CD14-positive monocyte (primary cell): ENCODE measurements at regions of chr10 and their contacts with region 1.

Region 1: GRCh38 chr10:62545160-62546066 is 171.2 kb downstream of the ZNF365 start:
- DNase-seq: peak; percentile 78 to 93 (median 91)
- H3K4me3 ChIP-seq: peak overlapping the region in 1 of 3 experiments; percentile 32
- H3K4me3 Mint-ChIP-seq: peak overlapping the region in 1 of 2 donors; percentile 76
- H3K27ac ChIP-seq: peak overlapping the region; percentile 69 to 87
- H3K27ac Mint-ChIP-seq: peak overlapping the region; percentile 95 to 99 (median 98)
- H3K4me1 ChIP-seq: peaks cover 56 to 66% of the 10 kb centered on the region in 2 donors
- H3K4me1 Mint-ChIP-seq: peaks cover 59% of the 10 kb centered on the region
- H3K27me3 ChIP-seq: no peaks in the 10 kb centered on the region
- H3K27me3 Mint-ChIP-seq: peaks cover 0 to 4% (median 2%) of the 10 kb centered on the region in 3 donors
- CTCF ChIP-seq: no peak

Region 2: DNA sequence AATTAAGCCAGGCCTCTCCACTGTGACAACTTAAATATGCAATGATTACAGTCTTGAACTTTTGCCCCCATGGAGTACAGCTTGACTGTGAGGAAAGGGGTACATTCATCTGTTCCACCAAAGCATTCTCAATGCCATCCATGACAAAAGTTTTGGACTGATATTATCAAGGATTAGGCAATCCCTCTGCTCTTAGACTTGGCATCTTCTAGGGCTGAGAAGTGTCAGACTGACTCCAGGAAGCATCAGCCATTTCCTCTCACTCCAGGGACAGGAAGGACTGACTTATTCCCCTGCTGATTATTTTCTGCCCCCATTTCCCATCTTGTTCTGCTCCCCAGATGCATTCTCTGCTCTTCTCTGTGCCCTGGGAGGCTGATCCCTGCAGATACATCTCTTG is 101.5 kb before region 1 on chr10:
- intact Hi-C with region 1: loop called (anchors 5 to 10 kb)
- DNase-seq: no peak
- H3K4me3 ChIP-seq: no peak overlapping the region
- H3K4me3 Mint-ChIP-seq: no peak overlapping the region
- H3K27ac ChIP-seq: no peak overlapping the region
- H3K27ac Mint-ChIP-seq: peak overlapping the region in 1 of 7 donors; percentile 27
- H3K4me1 ChIP-seq: no peaks in the 10 kb centered on the region
- H3K4me1 Mint-ChIP-seq: peaks cover 4% of the 10 kb centered on the region
- H3K27me3 ChIP-seq: no peaks in the 10 kb centered on the region
- H3K27me3 Mint-ChIP-seq: peaks cover 1 to 10% (median 2%) of the 10 kb centered on the region in 3 donors
- CTCF ChIP-seq: no peak

Region 3: DNA sequence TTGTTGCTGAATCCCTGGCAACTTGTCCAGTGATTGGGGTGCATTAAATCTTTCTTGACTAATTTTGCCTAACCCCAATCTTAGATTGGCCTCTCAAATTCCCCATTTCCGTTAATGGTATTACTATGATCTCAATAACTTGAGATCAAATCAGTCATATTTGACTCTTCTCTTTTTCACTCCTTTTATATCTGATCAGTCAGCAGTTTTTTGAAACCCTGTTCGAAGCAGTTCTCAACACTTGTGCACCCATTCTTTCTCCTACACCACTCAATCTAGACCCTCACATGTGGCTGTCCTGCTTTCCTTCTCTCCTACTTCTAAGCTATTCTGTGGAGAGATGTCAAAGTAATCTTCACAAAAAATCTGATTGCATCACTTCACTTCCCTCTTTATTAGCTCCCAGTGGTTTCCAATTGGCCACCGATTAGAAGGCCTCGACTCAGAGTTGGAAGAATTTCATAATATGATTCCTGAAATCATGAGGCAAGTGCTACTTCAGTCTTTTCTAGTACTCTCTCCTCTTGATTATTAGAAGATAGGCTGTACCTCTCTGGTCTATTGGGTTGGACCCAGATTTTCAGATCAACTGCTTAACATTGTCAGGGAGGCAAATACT is 42.3 kb before region 1 on chr10:
- intact Hi-C with region 1: loop called (anchors 5 kb)
- DNase-seq: peak; percentile 76 to 92 (median 89)
- H3K4me3 ChIP-seq: peak overlapping the region in 1 of 3 experiments; percentile 17
- H3K4me3 Mint-ChIP-seq: peak overlapping the region in 1 of 2 donors; percentile 49
- H3K27ac ChIP-seq: peak overlapping the region in 1 of 2 donors; percentile 81
- H3K27ac Mint-ChIP-seq: peak overlapping the region; percentile 85 to 99 (median 94)
- H3K4me1 ChIP-seq: peaks cover 63 to 77% of the 10 kb centered on the region in 2 donors
- H3K4me1 Mint-ChIP-seq: peaks cover 56% of the 10 kb centered on the region
- H3K27me3 ChIP-seq: no peaks in the 10 kb centered on the region
- H3K27me3 Mint-ChIP-seq: peaks cover 0 to 3% (median 0%) of the 10 kb centered on the region in 3 donors
- CTCF ChIP-seq: no peak

Region 4: GRCh38 chr10:62637249-62638061 is 92.0 kb after region 1 on chr10:
- intact Hi-C with region 1: loop called (anchors 10 kb)
- DNase-seq: peak; percentile 82 to 84 (median 82)
- H3K4me3 ChIP-seq: peak overlapping the region; percentile 9 to 66 (median 38)
- H3K4me3 Mint-ChIP-seq: no peak overlapping the region
- H3K27ac ChIP-seq: peak overlapping the region; percentile 95 to 99
- H3K27ac Mint-ChIP-seq: no peak overlapping the region
- H3K4me1 ChIP-seq: peaks cover 81 to 84% of the 10 kb centered on the region in 2 donors
- H3K4me1 Mint-ChIP-seq: no peaks in the 10 kb centered on the region
- H3K27me3 ChIP-seq: no peaks in the 10 kb centered on the region
- H3K27me3 Mint-ChIP-seq: peaks cover 0 to 6% (median 0%) of the 10 kb centered on the region in 3 donors
- CTCF ChIP-seq: no peak

Region 5: DNA sequence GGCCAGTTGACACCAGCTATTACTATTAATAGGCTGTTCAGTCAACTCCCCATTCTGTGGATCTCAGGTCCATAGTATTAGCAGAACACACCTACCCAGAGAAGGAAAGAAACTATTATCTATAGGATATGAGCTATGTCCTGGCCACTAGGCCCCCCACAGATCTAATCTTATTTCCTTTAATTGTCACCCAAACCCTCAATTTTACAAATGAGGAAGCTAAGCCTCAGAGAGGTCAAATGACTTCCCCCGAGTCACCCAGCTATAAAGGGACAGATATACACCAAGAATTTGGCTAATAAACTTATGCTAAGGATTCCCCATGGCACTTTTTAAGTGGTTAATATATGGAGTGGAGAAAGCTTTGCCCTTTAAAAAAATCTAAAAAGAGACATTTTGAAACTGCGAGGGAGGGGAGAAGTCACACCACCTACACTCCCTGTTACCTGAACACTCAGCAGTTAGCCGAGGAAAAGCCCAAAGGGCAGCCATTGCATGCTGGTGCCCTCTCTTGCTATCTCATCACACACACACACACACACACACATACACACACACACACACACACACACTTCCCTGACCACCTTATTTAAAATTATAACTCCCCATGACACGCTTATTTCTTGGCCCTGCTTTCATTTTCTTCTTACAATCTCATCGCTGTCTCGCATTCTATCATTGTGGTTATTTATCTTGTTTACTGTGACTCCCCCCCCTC is 102.1 kb after region 1 on chr10:
- intact Hi-C with region 1: no loop called
- DNase-seq: peak in 2 of 3 donors; percentile 27 to 30
- H3K4me3 ChIP-seq: no peak overlapping the region
- H3K4me3 Mint-ChIP-seq: no peak overlapping the region
- H3K27ac ChIP-seq: no peak overlapping the region
- H3K27ac Mint-ChIP-seq: peak overlapping the region in 1 of 7 donors; percentile 54
- H3K4me1 ChIP-seq: peaks cover 29 to 41% of the 10 kb centered on the region in 2 donors
- H3K4me1 Mint-ChIP-seq: peaks cover 29% of the 10 kb centered on the region
- H3K27me3 ChIP-seq: no peaks in the 10 kb centered on the region
- H3K27me3 Mint-ChIP-seq: peaks cover 0 to 2% (median 0%) of the 10 kb centered on the region in 3 donors
- CTCF ChIP-seq: no peak

Region 6: DNA sequence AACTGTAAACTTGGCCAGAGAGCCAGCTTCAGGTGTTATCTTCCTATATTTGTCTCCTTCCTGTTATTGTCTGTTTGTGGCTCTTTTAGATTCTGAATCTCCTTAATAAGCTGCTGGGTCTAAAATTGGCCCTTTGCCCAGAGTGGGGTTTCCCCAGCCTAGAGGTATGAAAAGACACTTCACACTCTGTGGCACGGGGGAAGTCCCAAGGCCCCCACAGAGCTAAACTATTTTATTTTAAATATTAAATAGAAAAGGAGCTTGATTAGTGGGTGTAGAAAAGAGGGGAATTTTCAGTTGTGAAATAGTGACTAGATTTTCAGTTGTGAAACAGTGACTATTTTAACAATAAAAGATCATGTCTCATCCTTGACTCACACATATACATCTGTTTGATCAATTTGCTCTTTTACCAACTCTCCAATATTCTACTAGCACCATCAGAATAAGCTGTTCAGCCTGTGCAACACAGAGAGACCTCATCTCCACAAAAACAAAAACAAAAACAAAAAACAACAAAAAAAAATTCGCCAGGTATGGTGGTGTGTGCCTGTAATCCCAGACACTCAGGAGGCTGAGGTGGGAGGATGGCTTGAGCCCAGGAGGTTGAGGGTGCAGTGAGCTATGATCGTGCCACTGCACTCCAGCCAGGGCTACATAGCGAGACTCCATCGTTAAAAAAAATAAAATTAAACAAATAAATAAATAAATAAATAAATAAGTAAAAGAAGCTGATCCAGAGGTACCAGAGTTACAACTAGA is 234.3 kb after region 1 on chr10:
- intact Hi-C with region 1: no loop called
- DNase-seq: peak; percentile 18 to 82 (median 28)
- H3K4me3 ChIP-seq: no peak overlapping the region
- H3K4me3 Mint-ChIP-seq: peak overlapping the region in 1 of 2 donors; percentile 19
- H3K27ac ChIP-seq: no peak overlapping the region
- H3K27ac Mint-ChIP-seq: no peak overlapping the region
- H3K4me1 ChIP-seq: no peaks in the 10 kb centered on the region
- H3K4me1 Mint-ChIP-seq: peaks cover 6% of the 10 kb centered on the region
- H3K27me3 ChIP-seq: peaks cover 3 to 6% of the 10 kb centered on the region in 2 donors
- H3K27me3 Mint-ChIP-seq: peaks cover 3 to 21% (median 14%) of the 10 kb centered on the region in 3 donors
- CTCF ChIP-seq: no peak

Region 7: DNA sequence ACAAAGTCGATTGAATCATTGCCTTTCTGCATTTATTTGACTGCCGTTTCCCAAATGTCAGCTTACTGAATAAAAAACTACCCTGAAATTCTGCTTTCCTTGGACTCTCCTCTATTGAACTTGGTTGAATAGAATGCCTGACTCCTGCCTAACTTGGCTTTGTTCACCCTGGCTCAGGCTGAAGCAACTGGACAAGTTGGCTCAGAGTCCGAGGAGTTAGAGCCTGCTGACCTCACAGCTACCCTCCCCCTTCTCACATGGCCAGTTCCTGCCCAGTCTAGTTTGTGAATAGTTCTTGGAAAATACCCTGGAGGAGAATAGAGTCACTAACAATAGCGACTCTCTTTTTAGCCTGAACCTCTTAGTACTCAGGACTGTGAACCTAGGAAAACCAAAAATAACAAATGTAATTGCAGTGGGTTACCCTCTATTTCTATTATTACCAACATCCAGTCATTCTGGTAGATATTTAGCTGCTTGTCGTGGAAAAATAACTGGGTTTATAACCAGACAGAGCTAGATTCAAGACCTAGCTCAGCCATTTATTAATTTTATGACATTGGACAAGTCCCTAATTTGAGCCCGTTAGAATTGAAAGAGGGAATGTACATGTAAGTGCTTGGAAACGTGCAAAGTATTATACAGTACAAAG is 570.4 kb after region 1 on chr10:
- intact Hi-C with region 1: no loop called
- DNase-seq: no peak
- H3K4me3 ChIP-seq: no peak overlapping the region
- H3K4me3 Mint-ChIP-seq: no peak overlapping the region
- H3K27ac ChIP-seq: no peak overlapping the region
- H3K27ac Mint-ChIP-seq: no peak overlapping the region
- H3K4me1 ChIP-seq: peaks cover 9 to 12% of the 10 kb centered on the region in 2 donors
- H3K4me1 Mint-ChIP-seq: peaks cover 13% of the 10 kb centered on the region
- H3K27me3 ChIP-seq: no peaks in the 10 kb centered on the region
- H3K27me3 Mint-ChIP-seq: peaks cover 0 to 7% (median 2%) of the 10 kb centered on the region in 3 donors
- CTCF ChIP-seq: no peak